Caco-2 (cell line): ENCODE measurements at regions of chr11 and their contacts with region 1.

Region 1: GRCh38 chr11:66958232-66958955 is at the start of gene PC:
- DNase-seq: peak; percentile 100
- H3K4me3 ChIP-seq: peak within 1 kb of the TSS; percentile 58
- H3K4me3 Mint-ChIP-seq: peak within 1 kb of the TSS; percentile 77
- H3K27ac Mint-ChIP-seq: peak within 1 kb of the TSS; percentile 64
- H3K4me1 ChIP-seq: peaks cover 12% of the 10 kb centered on the region
- H3K4me1 Mint-ChIP-seq: peaks cover 22% of the 10 kb centered on the region
- H3K27me3 ChIP-seq: no peaks in the 10 kb centered on the region
- H3K27me3 Mint-ChIP-seq: no peaks in the 10 kb centered on the region
- CTCF ChIP-seq: no peak
- total RNA-seq, gene PC: 22.5 and 25.8 TPM in 2 replicates

Region 2: GRCh38 chr11:66466225-66467027 is 492.0 kb before region 1 on chr11 and contains the start of gene PELI3:
- CTCF ChIA-PET with region 1: no interaction called
- POLR2A ChIA-PET with region 1: interaction called, 12 read pairs
- intact Hi-C with region 1: no loop called
- DNase-seq: peak; percentile 97
- H3K4me3 ChIP-seq: peak within 1 kb of the TSS; percentile 66
- H3K4me3 Mint-ChIP-seq: peak within 1 kb of the TSS; percentile 90
- H3K27ac Mint-ChIP-seq: peak within 1 kb of the TSS; percentile 62
- H3K4me1 ChIP-seq: peaks cover 19% of the 10 kb centered on the region
- H3K4me1 Mint-ChIP-seq: peaks cover 17% of the 10 kb centered on the region
- H3K27me3 ChIP-seq: no peaks in the 10 kb centered on the region; the same call in 1 of the 2 replicates
- H3K27me3 Mint-ChIP-seq: no peaks in the 10 kb centered on the region
- CTCF ChIP-seq: no peak
- total RNA-seq, gene PELI3: 21.0 and 21.1 TPM in 2 replicates

Region 3: GRCh38 chr11:66855574-66856495 is 102.6 kb before region 1 on chr11:
- CTCF ChIA-PET with region 1: interaction called, 3 read pairs
- POLR2A ChIA-PET with region 1: interaction called, 10 read pairs
- intact Hi-C with region 1: no loop called
- DNase-seq: peak; percentile 98 to 99
- H3K4me3 ChIP-seq: peak overlapping the region; percentile 94
- H3K4me3 Mint-ChIP-seq: peak overlapping the region; percentile 96
- H3K27ac Mint-ChIP-seq: peak overlapping the region; percentile 95
- H3K4me1 ChIP-seq: peaks cover 9% of the 10 kb centered on the region
- H3K4me1 Mint-ChIP-seq: peaks cover 8% of the 10 kb centered on the region
- H3K27me3 ChIP-seq: no peaks in the 10 kb centered on the region
- H3K27me3 Mint-ChIP-seq: no peaks in the 10 kb centered on the region
- CTCF ChIP-seq: no peak

Region 4: DNA sequence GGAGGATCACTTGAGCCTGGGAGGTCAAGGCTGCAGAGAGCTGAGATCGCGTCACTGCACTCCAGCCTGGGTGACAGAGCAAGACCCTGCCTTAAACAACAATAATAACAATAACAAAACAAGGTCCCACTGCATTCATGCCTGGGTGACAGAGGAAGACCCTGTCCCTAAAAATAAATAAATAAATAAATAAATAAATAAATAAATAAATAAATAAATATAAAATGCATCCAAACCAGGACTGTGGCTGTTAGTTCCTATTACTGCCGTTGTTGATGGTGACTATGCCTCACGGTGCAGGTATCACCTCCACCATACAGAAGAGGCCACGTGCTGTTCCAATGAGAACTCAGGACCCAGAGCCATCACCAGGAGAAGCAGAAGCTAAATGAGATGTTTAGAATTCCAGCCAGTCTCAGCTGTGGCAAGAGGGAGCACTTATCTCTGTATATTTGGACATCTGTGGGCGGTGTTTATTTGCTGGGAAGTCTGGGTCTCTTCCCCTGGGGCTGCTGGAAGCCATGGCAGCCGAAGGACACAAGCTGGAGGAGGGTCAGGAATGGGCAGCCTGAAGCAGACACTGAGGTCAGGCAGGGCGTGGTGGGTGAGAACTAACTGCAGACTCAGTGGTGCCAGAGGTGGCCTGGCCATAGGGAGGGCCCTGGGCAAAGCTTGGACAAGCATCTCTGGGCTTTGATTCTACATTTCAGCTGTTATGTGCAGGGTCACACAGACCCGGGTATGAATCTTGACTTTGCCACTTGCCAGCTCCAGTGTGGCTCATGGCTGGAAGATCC is 38.4 kb after region 1 on chr11:
- CTCF ChIA-PET with region 1: no interaction called
- POLR2A ChIA-PET with region 1: interaction called, 10 read pairs
- intact Hi-C with region 1: loop called (anchors 1 kb)
- DNase-seq: peak; percentile 87 to 90
- H3K4me3 ChIP-seq: no peak overlapping the region
- H3K4me3 Mint-ChIP-seq: no peak overlapping the region
- H3K27ac Mint-ChIP-seq: peak overlapping the region; percentile 56
- H3K4me1 ChIP-seq: peaks cover 11% of the 10 kb centered on the region
- H3K4me1 Mint-ChIP-seq: peaks cover 11% of the 10 kb centered on the region
- H3K27me3 ChIP-seq: no peaks in the 10 kb centered on the region
- H3K27me3 Mint-ChIP-seq: no peaks in the 10 kb centered on the region
- CTCF ChIP-seq: no peak

Region 5: DNA sequence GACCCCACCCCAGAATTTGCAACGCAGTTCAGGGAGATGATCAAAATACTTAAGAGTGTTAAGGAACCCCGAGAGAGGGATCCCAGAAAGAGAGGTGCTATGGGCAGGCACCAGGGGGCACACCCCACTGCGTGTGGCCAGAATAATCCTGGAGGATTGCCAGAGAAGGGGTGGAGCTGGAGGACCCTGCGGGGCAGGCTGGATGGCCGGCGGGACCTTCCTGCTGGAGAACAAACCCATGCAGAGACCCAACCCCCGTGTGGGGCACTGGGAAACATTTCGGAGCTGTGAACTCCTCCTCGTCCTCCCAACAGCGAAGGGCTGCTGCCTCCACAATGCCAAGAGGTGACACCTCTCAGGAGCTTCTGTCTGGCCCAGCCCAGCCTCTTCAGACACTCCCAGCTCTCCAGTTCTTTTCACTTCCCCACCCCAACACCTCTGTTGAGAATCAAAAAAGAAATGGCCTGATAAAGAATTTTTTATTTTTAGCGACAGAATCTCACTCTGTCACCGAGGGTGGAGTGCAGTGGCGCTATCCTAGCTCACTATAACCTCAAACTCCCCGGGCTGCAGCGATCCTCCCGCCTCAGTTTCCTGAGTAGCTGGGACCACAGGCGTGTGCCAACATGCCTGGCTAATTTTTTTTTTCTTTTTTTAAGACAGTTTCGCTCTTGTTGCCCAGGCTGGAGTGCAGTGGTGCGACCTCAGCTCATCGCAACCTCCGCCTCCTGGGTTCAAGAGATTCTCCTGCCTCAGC is 123.8 kb after region 1 on chr11:
- CTCF ChIA-PET with region 1: interaction called, 11 read pairs
- POLR2A ChIA-PET with region 1: no interaction called
- intact Hi-C with region 1: no loop called
- DNase-seq: no peak
- H3K4me3 ChIP-seq: no peak overlapping the region
- H3K4me3 Mint-ChIP-seq: no peak overlapping the region
- H3K27ac Mint-ChIP-seq: no peak overlapping the region
- H3K4me1 ChIP-seq: peaks cover 25% of the 10 kb centered on the region
- H3K4me1 Mint-ChIP-seq: peaks cover 21% of the 10 kb centered on the region
- H3K27me3 ChIP-seq: no peaks in the 10 kb centered on the region
- H3K27me3 Mint-ChIP-seq: no peaks in the 10 kb centered on the region
- CTCF ChIP-seq: peak in 1 of 2 experiments; percentile 13